ENCODE measurements at regions of chr18 and their contacts with region 1.

Region 1: DNA sequence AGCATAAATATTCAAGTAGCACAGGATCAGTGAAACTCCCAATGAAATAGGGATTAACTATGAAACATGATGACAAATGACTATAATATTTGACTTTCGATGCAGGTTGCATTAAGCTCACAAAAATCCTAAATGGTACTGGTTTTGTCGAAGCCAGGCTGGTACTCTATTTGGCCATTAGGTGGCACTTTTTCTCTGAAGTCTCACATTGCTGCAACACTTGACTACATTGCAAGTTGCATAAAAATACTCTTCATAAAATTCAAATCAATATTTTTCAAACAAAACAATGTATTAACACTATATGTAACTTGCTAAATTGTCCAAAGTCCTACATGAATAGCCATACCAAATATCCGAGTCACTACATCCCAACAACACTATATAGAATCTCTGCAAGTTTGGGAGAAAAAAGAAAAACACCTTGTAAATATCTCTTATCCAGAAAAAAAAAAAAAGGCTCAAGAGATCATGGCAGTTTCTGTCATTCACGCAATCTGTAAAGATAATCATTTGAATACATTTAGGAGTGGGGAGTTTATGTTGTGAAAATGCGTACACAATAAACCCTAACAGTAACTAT is 9.5 kb downstream of the RTTN start:
- DNase-seq: no peak
- H3K4me3 Mint-ChIP-seq: no peak overlapping the region
- H3K27ac Mint-ChIP-seq: no peak overlapping the region
- H3K4me1 Mint-ChIP-seq: peaks cover 50% of the 10 kb centered on the region
- H3K27me3 Mint-ChIP-seq: no peaks in the 10 kb centered on the region

Region 2: DNA sequence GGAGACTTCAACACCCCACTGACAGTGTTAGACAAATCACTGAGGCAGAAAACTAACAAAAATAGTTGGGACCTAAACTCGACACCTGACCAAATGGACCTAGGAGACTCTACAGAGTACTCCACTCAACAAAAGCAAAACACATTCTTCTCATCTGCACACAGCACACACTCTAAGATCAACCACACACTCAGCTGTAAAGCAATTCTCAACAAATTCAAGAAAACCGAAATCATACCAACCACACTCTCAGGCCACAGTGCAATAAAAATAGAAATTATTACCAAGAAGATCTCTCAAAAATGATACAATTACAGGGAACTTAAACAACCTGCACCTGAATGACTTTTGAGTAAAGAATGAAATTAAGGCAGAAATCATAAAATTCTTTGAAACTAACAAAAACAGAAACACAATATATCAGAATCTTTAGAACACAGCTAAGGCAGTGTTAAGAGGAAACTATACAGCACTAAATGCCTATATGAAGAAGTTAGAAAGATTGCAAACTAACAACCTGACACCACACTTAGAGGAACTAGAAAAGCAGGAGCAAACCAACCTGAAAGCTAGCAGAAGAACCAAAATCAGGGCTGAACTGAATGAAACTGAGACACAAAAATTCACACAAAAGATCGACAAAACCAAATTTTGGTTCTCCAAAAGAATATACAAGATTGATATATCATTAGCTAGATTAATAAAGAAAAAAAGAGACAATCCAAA is 36.8 kb before region 1 on chr18:
- CTCF ChIA-PET with region 1: no interaction called
- POLR2A ChIA-PET with region 1: no interaction called
- DNase-seq: no peak
- H3K4me3 Mint-ChIP-seq: no peak overlapping the region
- H3K27ac Mint-ChIP-seq: no peak overlapping the region
- H3K4me1 Mint-ChIP-seq: peaks cover 33% of the 10 kb centered on the region
- H3K27me3 Mint-ChIP-seq: no peaks in the 10 kb centered on the region

Region 3: GRCh38 chr18:70183441-70183840 is 12.5 kb before region 1 on chr18:
- CTCF ChIA-PET with region 1: interaction called, 18 read pairs
- POLR2A ChIA-PET with region 1: no interaction called
- DNase-seq: no peak
- H3K4me3 Mint-ChIP-seq: no peak overlapping the region
- H3K27ac Mint-ChIP-seq: no peak overlapping the region
- H3K4me1 Mint-ChIP-seq: peaks cover 5% of the 10 kb centered on the region
- H3K27me3 Mint-ChIP-seq: no peaks in the 10 kb centered on the region

Region 4: GRCh38 chr18:70454704-70455322 is 258.9 kb after region 1 on chr18:
- CTCF ChIA-PET with region 1: interaction called, 35 read pairs
- POLR2A ChIA-PET with region 1: interaction called, 4 read pairs
- DNase-seq: peak; percentile 25
- H3K4me3 Mint-ChIP-seq: no peak overlapping the region
- H3K27ac Mint-ChIP-seq: no peak overlapping the region
- H3K4me1 Mint-ChIP-seq: no peaks in the 10 kb centered on the region
- H3K27me3 Mint-ChIP-seq: peaks cover 6% of the 10 kb centered on the region